ENCODE measurements at regions of chr1 and their contacts with region 1.

Region 1: DNA sequence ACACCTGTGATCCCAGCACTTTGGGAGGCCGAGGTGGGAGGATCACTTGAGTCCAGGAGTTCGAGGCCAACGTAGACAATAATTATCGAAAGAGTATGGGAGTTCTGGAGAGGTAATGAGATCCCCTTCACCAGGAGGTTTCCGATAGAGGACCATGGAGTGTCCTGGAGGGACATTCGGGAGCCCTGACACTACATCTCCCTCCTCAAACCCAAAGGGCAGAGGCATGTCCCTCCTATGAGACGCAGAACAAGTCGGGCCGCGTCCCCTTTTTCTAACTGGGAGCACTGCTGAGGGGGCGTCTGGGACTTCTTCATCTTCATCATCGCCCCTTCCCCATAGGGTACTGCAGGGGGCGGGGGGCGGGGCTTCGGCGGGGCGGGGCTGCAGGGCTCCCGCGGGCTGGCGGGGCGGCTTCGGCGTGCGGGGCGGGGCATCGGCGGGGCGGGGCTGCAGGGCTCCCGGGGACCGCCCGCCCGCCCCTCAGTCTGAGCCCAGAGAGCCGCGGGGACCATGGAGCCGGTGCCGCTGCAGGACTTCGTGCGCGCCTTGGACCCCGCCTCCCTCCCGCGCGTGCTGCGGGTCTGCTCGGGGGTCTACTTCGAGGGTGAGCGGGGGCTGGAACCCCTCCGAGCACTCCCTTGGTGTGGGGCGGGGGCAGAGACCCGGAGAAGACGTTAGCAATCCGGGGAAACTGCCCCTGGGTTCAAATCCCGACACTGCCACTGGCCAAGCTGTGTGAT is at the start of gene THEMIS2:
- DNase-seq: peak; percentile 70 to 84
- ATAC-seq: peak; percentile 66 to 83 (median 75)
- H3K4me3 ChIP-seq: peak within 1 kb of the TSS; percentile 92
- H3K4me3 Mint-ChIP-seq: peak within 1 kb of the TSS; percentile 94
- H3K27ac ChIP-seq: peak within 1 kb of the TSS; percentile 91
- H3K27ac Mint-ChIP-seq: peak within 1 kb of the TSS; percentile 91 to 95
- H3K4me1 ChIP-seq: peaks cover 78% of the 10 kb centered on the region
- H3K4me1 Mint-ChIP-seq: peaks cover 36 to 61% of the 10 kb centered on the region in 2 donors
- H3K27me3 ChIP-seq: no peaks in the 10 kb centered on the region
- H3K27me3 Mint-ChIP-seq: no peaks in the 10 kb centered on the region
- CTCF ChIP-seq: no peak
- total RNA-seq, gene THEMIS2: 104 to 234 (median 122) TPM

Region 2: GRCh38 chr1:26999440-26999987 is 872.7 kb before region 1 on chr1:
- intact Hi-C with region 1: no loop called
- DNase-seq: no peak
- ATAC-seq: no peak
- H3K4me3 ChIP-seq: no peak overlapping the region
- H3K4me3 Mint-ChIP-seq: no peak overlapping the region
- H3K27ac ChIP-seq: no peak overlapping the region
- H3K27ac Mint-ChIP-seq: no peak overlapping the region
- H3K4me1 ChIP-seq: peaks cover 24% of the 10 kb centered on the region
- H3K4me1 Mint-ChIP-seq: peaks cover 11 to 12% of the 10 kb centered on the region in 2 donors
- H3K27me3 ChIP-seq: peaks cover 5% of the 10 kb centered on the region
- H3K27me3 Mint-ChIP-seq: peaks cover 16 to 18% of the 10 kb centered on the region in 2 donors
- CTCF ChIP-seq: no peak

Region 3: GRCh38 chr1:27885114-27885528 is 12.9 kb after region 1 on chr1:
- intact Hi-C with region 1: loop called (anchors 1 kb)
- DNase-seq: no peak
- ATAC-seq: no peak
- H3K4me3 ChIP-seq: no peak overlapping the region
- H3K4me3 Mint-ChIP-seq: peak overlapping the region; percentile 80
- H3K27ac ChIP-seq: peak overlapping the region; percentile 85
- H3K27ac Mint-ChIP-seq: peak overlapping the region; percentile 96 to 99
- H3K4me1 ChIP-seq: peaks cover 85% of the 10 kb centered on the region
- H3K4me1 Mint-ChIP-seq: peaks cover 51 to 58% of the 10 kb centered on the region in 2 donors
- H3K27me3 ChIP-seq: no peaks in the 10 kb centered on the region
- H3K27me3 Mint-ChIP-seq: no peaks in the 10 kb centered on the region
- CTCF ChIP-seq: no peak

Region 4: DNA sequence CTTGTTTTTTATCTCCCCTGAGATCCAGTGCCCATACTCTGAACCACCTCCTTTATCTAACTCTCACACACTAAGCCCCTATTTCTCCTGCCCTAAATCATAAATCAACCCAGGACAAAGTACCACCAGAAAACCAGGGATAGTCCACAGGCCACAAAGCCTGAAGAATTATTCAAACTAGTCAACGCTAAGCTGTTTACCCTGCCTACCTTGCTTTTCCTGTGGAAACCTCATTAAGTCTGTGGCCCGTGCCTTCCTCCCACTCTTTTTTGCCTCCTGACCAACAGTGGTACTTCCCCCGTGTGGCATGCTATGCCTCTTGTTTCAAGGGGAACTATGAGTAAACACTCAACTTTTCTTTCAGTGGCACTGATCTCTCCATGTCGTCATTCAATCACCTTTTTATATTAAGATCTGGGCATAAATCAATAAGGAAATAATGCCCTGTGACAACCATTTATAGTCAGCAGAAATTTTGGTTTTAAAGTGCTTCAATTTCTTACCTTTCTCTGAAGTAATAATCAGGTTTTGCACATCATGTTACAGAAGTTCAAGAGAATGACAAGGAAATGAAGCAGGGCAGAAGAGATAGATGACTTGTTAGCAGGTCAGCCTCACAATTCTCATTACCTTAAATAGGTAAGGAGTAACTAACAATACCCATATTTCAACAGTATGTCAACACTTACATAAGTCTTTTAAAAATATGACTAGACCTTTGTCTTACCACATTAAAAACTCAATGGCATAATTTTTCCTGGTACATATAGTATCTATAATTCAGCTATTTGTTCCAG is 184.1 kb after region 1 on chr1:
- intact Hi-C with region 1: no loop called
- DNase-seq: peak; percentile 21 to 73
- ATAC-seq: peak; percentile 68 to 96 (median 89)
- H3K4me3 ChIP-seq: no peak overlapping the region
- H3K4me3 Mint-ChIP-seq: peak overlapping the region; percentile 67
- H3K27ac ChIP-seq: peak overlapping the region; percentile 56
- H3K27ac Mint-ChIP-seq: peak overlapping the region; percentile 89 to 92
- H3K4me1 ChIP-seq: peaks cover 9% of the 10 kb centered on the region
- H3K4me1 Mint-ChIP-seq: peaks cover 35 to 41% of the 10 kb centered on the region in 2 donors
- H3K27me3 ChIP-seq: no peaks in the 10 kb centered on the region
- H3K27me3 Mint-ChIP-seq: no peaks in the 10 kb centered on the region
- CTCF ChIP-seq: no peak